ENCODE measurements at regions of chr14 and their contacts with region 1.

Region 1: DNA sequence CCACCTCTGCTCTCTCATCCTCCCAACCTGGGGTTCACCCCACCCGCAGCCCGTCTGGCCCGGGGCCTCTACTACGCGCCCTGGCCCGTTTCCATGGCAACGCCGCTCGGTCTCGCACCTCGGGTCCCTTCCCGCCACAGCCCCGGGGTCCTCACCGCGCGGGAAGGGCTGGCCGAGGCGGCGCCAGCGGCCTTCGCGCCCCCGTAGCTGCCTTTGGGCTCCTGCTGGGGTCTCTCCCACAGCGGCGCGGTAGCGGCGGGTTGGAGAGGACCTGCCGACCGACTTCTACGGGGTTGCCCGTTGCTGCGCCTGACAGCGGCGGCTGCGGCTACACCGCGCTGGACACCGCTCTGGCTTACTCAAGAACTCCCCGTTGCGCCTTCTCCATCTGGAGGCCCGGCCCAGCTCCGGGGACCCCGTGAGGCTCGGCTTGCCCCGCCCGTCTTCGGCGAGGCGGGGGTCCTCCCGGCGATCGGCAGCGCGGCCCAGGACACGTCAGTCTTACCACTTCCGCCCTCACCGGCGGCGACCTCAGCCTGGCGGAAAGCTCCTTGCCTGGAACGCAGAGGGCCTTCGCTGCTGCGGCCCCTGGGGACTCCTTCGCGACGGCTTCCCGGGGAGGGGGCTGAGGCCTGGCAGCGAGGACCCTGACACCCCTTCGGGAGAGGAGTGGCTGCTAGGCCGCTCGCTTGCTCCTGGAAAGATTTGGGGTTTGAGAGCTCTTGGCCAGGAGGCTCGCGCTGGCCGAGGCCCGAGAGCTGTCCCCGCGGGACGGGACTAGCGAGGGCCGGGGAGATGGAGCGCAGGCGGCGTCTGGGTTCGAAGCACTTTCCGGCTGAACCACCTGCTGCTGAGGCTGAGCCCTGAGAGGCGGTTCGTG is at the start of gene TM9SF1:
- DNase-seq: peak; percentile 84
- H3K4me3 Mint-ChIP-seq: peak within 1 kb of the TSS; percentile 81
- H3K27ac Mint-ChIP-seq: peak within 1 kb of the TSS; percentile 96
- H3K4me1 Mint-ChIP-seq: peaks cover 18% of the 10 kb centered on the region
- H3K27me3 Mint-ChIP-seq: no peaks in the 10 kb centered on the region
- CTCF ChIP-seq: no peak
- total RNA-seq, gene TM9SF1: 67.8 and 103 TPM in 2 replicates

Region 2: DNA sequence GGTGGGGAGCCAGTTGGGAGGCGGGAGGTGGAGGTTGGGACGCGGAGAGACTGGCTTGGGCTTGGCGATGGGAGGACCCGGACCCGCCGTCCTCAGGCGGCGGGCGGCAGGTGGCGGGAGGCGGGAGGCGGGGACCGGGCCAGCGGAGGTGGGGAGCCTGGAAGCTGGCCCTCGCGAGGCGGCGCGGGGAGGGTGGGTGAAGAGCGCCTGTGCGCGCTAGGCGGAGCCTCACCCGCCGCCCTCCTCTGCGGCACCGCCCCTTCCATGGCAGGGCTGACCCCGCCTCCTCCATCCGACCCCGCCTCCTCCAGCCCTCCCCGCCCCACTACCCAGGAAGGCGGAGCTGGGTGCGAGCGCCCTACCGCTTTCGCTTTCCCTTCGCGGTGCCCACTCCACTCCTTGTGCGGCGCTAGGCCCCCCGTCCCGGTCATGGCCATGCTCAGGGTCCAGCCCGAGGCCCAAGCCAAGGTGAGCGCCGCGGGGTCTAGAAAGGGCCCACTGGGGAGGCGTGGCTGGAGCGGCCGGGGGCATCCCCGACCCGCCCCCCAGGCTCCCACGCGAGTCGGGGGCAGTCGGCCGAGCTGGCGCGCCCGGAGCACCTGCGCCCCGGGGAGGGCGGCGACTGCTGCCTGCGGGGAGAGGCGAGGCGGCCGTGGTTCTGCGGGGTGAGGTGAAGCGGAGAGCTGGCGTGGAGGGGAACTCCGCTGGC is 59.4 kb before region 1 on chr14 and contains the start of gene PSME1:
- CTCF ChIA-PET with region 1: no interaction called
- POLR2A ChIA-PET with region 1: interaction called, 16 read pairs
- intact Hi-C with region 1: no loop called
- DNase-seq: peak; percentile 89
- H3K4me3 Mint-ChIP-seq: peak within 1 kb of the TSS; percentile 75
- H3K27ac Mint-ChIP-seq: peak within 1 kb of the TSS; percentile 86
- H3K4me1 Mint-ChIP-seq: peaks cover 42% of the 10 kb centered on the region
- H3K27me3 Mint-ChIP-seq: no peaks in the 10 kb centered on the region
- CTCF ChIP-seq: no peak
- total RNA-seq, gene PSME1: 126 and 135 TPM in 2 replicates

Region 3: DNA sequence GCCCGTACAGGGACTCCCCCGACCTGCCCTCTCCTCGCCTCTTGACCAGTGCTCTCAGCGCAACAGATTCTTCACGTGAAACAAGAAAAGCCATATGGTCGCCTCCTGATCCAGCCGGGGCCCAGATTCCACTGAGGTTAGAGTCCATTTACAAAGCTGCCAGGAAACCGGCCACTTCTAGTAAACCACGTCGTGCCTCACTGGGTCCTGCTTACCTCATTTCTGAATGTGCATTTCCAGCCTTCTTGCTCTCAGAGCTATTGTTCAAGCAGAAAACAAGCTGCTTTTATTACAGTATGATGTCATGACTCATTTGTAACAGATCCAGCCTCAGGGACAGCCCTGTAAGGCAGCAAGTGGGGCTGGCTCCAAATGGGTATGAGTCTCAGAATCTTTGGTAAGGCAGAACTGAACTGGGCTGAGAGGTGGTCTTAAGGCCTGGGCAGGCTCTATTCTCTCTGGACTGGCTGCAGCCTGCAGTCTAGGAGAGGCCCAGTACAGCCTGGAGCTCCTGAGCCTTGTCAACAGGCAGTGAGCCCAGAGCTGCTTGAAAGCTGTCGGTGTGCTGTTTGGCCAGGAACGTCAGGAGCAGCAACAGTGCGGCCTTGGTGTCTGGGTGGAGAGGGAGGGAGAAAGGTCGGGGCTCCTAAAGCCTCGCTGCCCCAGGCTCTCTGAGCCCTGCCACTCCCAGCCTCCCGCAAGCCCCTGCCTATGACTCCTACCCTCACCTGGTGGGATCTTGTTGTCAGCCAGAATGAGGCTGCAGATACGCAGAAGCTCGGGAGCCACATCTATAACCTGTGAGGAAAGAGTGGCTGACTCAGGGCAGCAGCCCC is 15.3 kb before region 1 on chr14:
- CTCF ChIA-PET with region 1: interaction called, 7 read pairs
- POLR2A ChIA-PET with region 1: interaction called, 12 read pairs
- intact Hi-C with region 1: no loop called
- DNase-seq: no peak
- H3K4me3 Mint-ChIP-seq: no peak overlapping the region
- H3K27ac Mint-ChIP-seq: no peak overlapping the region
- H3K4me1 Mint-ChIP-seq: no peaks in the 10 kb centered on the region
- H3K27me3 Mint-ChIP-seq: no peaks in the 10 kb centered on the region
- CTCF ChIP-seq: no peak

Region 4: DNA sequence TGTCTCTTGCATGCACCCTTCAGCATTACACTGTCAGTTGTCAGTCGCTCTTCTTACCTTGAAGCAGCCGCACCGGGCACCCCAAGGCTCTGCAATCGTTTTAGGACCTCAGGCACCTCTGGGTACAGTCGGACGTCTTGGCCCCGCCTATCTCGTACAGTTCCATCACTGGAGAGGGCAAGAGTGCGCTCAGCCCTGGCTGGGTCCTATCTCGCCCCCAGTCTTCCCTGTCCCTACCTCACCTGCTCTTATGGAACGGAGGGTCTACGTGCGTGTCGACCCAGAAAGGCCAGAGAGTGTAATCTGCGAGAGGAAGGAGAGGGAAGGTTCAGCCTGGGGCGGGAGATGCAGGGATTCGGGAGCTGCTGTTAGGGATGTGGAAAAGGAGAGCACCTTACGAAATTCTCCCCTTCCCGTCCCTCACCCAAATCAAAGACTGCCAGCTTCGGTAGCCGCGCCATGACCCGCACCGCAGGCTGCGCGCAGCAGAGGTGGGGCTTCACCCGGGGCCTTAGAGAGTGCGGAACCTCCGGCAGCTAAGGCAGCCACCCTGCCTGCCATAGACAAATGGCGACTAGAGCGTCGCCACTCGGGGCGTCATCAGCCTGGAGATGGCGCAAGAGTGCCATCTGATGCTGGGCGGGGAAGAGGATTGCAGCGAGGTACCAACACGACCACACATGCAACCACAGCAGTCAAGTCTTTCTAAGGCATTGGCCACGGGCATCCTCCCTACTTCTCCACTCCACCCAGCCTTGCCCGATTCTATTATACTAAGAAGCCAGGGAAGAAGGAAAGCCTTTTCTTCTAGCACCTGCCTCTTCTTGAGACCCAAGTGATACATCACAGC is 20.3 kb after region 1 on chr14 and contains the start of gene MDP1:
- CTCF ChIA-PET with region 1: interaction called, 5 read pairs
- POLR2A ChIA-PET with region 1: interaction called, 68 read pairs
- intact Hi-C with region 1: no loop called
- DNase-seq: peak; percentile 87
- H3K4me3 Mint-ChIP-seq: peak within 1 kb of the TSS; percentile 80
- H3K27ac Mint-ChIP-seq: peak within 1 kb of the TSS; percentile 73
- H3K4me1 Mint-ChIP-seq: peaks cover 20% of the 10 kb centered on the region
- H3K27me3 Mint-ChIP-seq: no peaks in the 10 kb centered on the region
- CTCF ChIP-seq: peak; percentile 25
- total RNA-seq, gene MDP1: 11.0 and 20.2 TPM in 2 replicates

Region 5: GRCh38 chr14:24695265-24696241 is 500.1 kb after region 1 on chr14:
- CTCF ChIA-PET with region 1: no interaction called
- POLR2A ChIA-PET with region 1: no interaction called
- intact Hi-C with region 1: no loop called
- DNase-seq: no peak
- H3K4me3 Mint-ChIP-seq: no peak overlapping the region
- H3K27ac Mint-ChIP-seq: no peak overlapping the region
- H3K4me1 Mint-ChIP-seq: no peaks in the 10 kb centered on the region
- H3K27me3 Mint-ChIP-seq: no peaks in the 10 kb centered on the region
- CTCF ChIP-seq: no peak

Measured in MCF 10A (cell line).